Activated B cell treated with CpG ODN at 0.5 μM for 24 hours (primary cell): ENCODE measurements at regions of chr9 and their contacts with region 1.

Region 1: DNA sequence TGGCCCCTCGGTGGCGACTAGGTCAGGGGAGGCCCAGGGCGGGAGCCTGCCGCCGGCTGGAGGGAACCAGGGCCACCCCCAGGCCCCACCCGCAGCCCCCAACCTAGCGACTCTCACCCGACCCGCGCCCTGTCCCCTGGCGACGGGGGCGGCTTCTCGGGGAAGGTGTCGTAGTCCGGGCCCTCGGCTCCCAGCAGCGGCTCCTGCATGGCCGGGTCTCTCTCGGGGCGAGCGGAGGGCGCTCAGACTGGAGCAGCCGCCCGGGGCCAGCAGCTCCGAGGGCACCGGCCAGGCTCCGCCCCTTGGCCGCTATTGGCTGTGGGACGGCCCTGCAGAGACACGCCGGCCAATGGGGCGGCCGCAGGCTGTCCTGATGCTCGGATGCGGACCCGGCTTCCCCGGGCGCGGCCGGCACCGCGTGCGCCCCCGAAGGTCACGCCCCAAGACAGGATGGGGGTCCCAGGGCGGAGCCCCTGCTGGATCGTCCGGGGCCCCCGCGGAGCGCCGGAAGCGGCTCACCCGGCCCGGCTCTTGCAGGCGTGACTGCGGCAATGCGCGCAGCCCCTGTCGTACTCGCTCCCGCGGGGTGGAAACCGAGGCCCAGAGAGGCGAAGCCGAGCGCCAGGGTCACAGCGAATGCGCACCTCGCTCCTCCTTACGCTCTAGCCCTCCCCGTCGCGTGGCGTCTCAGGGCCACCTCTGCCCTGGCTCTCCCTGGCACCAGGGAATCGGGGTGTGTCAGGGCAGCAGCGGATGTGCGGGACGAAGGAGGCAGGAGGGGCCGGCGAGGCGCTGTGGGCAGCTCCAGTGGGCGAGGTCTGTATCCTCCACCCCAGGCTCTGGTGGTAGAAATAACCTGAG is at the start of gene SLC2A6:
- DNase-seq: peak; percentile 85
- ATAC-seq: peak; percentile 93
- H3K4me3 Mint-ChIP-seq: peak within 1 kb of the TSS; percentile 90
- H3K27ac Mint-ChIP-seq: peak within 1 kb of the TSS; percentile 90
- H3K4me1 Mint-ChIP-seq: peaks cover 29% of the 10 kb centered on the region
- H3K27me3 Mint-ChIP-seq: no peaks in the 10 kb centered on the region
- CTCF ChIP-seq: no peak
- total RNA-seq, gene SLC2A6: 32.9 and 37.4 TPM in 2 replicates

Region 2: DNA sequence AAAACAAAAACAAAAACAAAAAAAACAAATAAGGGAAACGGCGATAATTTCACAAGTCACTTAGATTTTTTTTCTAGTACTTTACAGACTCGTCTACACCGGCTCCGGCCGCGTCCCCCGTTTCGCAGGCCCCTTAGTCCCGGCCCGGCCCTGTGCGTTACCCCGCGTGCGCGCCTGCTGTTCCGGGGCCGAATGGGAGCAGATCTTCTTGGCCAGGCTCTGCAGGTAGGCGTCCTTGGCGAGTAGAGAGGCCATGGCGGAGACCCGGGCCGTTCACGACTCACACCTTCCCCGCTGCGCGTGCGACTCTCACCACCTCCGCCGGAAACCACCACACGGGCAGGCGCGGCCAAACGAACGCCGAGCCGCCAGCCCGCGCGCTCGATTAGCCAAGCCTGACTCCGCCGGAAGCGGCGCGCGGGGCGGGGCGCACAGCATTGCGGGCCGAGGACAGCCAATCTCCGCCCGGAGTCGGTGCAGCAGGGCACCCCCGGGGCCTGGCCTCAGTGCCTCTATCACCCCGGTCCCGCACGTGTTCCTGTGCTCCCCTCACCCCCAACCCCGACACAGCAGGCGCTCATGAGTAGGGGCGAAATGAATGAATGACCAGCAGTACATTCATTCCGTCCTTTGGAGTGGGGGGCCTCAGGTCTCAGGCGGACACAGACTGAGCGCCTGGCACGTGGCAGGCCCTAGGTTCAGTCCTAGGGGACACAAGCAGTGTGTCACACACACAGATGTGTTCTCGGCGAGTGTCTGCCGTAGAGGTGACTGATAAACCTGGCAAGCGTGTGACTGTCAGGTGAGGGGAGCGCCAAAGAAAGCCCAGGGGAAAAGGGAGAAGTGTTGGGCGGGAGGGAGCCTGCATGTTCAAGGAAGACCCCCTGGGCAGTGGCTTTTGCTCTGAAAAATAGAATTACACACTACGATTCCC is 142.9 kb before region 1 on chr9 and contains the start of gene SURF6:
- CTCF ChIA-PET with region 1: no interaction called
- POLR2A ChIA-PET with region 1: no interaction called
- intact Hi-C with region 1: loop called (anchors 2 kb)
- DNase-seq: peak; percentile 94
- ATAC-seq: peak; percentile 93
- H3K4me3 Mint-ChIP-seq: peak within 1 kb of the TSS; percentile 97
- H3K27ac Mint-ChIP-seq: peak within 1 kb of the TSS; percentile 92
- H3K4me1 Mint-ChIP-seq: peaks cover 57% of the 10 kb centered on the region
- H3K27me3 Mint-ChIP-seq: no peaks in the 10 kb centered on the region
- CTCF ChIP-seq: no peak
- total RNA-seq, gene SURF6: 22.4 and 23.9 TPM in 2 replicates

Region 3: DNA sequence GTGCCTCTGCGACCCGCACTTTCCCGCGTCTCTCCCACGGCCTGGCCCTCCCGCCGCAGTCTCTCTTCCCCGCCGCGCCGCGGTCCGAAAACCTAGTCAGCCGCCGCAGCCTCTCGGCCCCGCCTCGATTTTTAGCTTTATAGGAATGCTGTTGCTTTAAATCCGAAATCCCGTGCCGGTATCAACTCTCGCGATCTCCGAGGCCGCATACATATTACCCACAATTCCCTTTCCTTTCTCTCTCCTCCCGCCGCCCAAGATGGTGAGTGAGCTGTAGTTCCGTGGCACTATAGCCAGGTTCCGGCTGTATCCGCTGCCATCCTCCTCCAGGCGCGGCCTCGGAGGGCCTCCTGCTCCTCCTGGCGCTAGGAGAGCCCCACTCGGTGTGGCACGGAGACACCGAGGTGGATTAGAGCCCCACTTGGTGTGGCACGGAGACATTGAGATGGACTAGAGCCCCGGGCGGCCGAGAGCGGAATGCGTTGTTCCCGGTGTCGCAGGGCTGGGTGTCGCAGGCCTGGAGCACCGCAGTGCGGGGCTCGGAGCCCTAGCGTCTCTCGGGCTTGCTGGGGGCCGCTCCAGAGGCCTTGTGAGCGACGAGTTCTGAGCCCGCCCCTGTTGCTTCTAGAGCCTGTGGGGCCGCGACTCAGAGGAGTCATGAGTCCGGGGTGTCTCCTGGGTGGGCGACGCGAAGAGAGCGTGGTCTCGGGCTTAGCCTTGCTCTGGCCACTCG is 130.9 kb before region 1 on chr9 and contains the starts of genes MED22 and RPL7A:
- CTCF ChIA-PET with region 1: no interaction called
- POLR2A ChIA-PET with region 1: interaction called, 3 read pairs
- intact Hi-C with region 1: loop called (anchors 2 kb)
- DNase-seq: peak; percentile 82
- ATAC-seq: peak; percentile 83
- H3K4me3 Mint-ChIP-seq: peak within 1 kb of the TSS; percentile 99
- H3K27ac Mint-ChIP-seq: peak within 1 kb of the TSS; percentile 96
- H3K4me1 Mint-ChIP-seq: peaks cover 45% of the 10 kb centered on the region
- H3K27me3 Mint-ChIP-seq: no peaks in the 10 kb centered on the region
- CTCF ChIP-seq: no peak
- total RNA-seq, gene MED22: 40.7 and 45.7 TPM in 2 replicates
- total RNA-seq, gene RPL7A: 3,786 and 4,134 TPM in 2 replicates

Region 4: GRCh38 chr9:133406480-133407307 is 72.4 kb before region 1 on chr9:
- CTCF ChIA-PET with region 1: no interaction called
- POLR2A ChIA-PET with region 1: no interaction called
- intact Hi-C with region 1: loop called (anchors 2 kb)
- DNase-seq: peak; percentile 71
- ATAC-seq: peak; percentile 95
- H3K4me3 Mint-ChIP-seq: no peak overlapping the region
- H3K27ac Mint-ChIP-seq: peak overlapping the region; percentile 61
- H3K4me1 Mint-ChIP-seq: peaks cover 6% of the 10 kb centered on the region
- H3K27me3 Mint-ChIP-seq: no peaks in the 10 kb centered on the region
- CTCF ChIP-seq: peak; percentile 56

Region 5: GRCh38 chr9:133417541-133418461 is 61.3 kb before region 1 on chr9 and contains the start of gene REXO4:
- CTCF ChIA-PET with region 1: no interaction called
- POLR2A ChIA-PET with region 1: interaction called, 6 read pairs
- intact Hi-C with region 1: loop called (anchors 1 kb)
- DNase-seq: peak; percentile 86
- ATAC-seq: peak; percentile 84
- H3K4me3 Mint-ChIP-seq: peak within 1 kb of the TSS; percentile 90
- H3K27ac Mint-ChIP-seq: peak within 1 kb of the TSS; percentile 91
- H3K4me1 Mint-ChIP-seq: peaks cover 71% of the 10 kb centered on the region
- H3K27me3 Mint-ChIP-seq: no peaks in the 10 kb centered on the region
- CTCF ChIP-seq: no peak
- total RNA-seq, gene REXO4: 31.6 and 33.3 TPM in 2 replicates

Region 6: DNA sequence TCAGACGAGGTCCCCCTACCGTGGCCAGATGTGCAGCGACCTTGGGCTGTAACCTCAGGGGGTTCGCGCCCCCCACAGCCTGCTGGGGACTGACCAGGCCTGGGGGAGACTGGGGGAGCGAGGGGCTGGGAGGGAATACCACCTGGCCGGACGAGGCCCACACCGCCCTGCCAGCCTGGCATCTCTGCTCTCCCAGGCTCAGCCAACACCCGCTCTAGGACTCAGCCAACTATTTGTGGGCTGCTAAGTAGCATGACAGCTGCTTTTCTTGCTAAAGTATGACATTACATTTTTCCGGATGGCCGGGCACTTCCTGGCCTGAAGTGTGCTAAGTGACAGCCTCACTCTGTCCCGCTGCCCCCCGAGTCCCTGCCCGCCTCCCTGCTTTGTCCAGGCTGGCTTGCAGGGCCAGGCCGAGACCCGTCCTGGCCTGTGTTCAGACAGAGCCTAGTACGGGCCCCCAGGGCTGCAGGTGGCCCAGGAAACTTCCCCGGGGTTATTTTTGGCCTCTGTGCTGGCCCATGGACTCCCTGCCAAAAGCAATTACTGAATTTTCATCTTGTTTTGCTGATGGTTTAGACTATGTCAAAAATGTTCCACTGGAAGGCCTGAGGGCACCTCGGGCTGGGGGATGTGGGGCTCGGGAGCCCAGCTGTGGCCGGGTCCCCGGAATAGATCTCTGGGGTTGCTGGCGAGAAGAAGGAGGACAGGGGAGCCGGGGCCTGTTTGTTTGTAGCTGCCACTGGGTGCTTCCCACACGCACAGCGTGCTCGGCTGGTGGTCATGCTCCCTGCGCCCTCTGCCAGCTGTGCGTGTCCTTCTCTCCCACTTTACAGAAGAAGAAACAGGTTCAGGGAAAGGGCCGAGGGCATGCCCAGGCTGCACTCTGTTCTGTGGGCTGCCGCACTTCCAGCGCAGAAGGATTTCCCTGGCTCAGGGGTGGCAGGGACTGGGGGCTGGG is 13.3 kb after region 1 on chr9:
- CTCF ChIA-PET with region 1: no interaction called
- POLR2A ChIA-PET with region 1: no interaction called
- intact Hi-C with region 1: no loop called
- DNase-seq: no peak
- ATAC-seq: no peak
- H3K4me3 Mint-ChIP-seq: no peak overlapping the region
- H3K27ac Mint-ChIP-seq: no peak overlapping the region
- H3K4me1 Mint-ChIP-seq: no peaks in the 10 kb centered on the region
- H3K27me3 Mint-ChIP-seq: no peaks in the 10 kb centered on the region
- CTCF ChIP-seq: no peak

Region 7: GRCh38 chr9:133673258-133673655 is 194.2 kb after region 1 on chr9:
- CTCF ChIA-PET with region 1: no interaction called
- POLR2A ChIA-PET with region 1: no interaction called
- intact Hi-C with region 1: no loop called
- DNase-seq: no peak
- ATAC-seq: no peak
- H3K4me3 Mint-ChIP-seq: no peak overlapping the region
- H3K27ac Mint-ChIP-seq: no peak overlapping the region
- H3K4me1 Mint-ChIP-seq: no peaks in the 10 kb centered on the region
- H3K27me3 Mint-ChIP-seq: peaks cover 2% of the 10 kb centered on the region
- CTCF ChIP-seq: no peak

Region 8: DNA sequence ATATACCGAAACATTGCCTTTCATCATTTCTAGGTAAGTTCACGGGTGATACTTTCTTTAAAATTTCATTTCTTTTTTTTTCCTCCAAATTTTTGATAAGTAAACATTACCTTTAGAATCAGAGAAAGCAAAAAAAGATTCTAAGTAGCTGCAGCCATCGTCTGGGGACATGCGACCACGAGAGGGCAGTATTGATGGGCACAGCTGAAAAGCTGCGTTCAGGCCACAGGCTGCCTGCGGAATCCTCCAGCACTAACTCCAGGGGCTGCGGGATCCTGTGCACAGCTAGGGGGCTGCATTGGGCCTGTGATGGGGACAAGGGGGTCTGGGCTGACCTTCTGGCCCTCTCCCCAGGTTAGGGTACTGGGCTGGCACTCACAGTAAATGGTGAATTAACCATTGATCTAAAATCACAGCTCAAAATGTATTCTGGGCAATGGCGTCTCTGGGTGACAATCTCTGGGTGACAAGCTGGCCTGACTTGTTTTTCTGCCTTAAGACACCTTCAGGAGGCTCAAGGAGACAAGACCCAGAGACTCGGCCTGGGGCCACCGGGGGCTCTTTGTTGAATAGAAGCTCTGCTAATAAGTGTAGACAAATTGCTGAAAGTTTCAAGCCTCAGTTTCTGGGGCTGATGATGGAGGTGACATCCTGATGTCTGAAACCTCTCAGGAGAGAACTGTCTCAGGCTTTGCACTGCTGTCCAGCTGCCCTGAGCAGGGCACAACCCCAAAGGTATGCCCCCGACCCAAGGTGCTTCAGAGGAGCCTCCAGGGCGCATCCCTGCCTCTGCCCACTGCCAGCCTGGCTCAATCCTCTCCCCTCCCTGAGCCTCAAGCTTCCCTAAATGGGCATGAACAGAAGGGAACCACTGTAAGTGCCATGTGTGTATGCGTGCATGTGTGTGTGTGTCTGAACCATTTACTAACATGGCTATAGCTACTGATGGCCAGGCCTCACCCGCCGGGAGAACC is 303.4 kb after region 1 on chr9:
- CTCF ChIA-PET with region 1: no interaction called
- POLR2A ChIA-PET with region 1: no interaction called
- intact Hi-C with region 1: no loop called
- DNase-seq: peak; percentile 60
- ATAC-seq: peak; percentile 35
- H3K4me3 Mint-ChIP-seq: peak overlapping the region; percentile 20
- H3K27ac Mint-ChIP-seq: peak overlapping the region; percentile 6
- H3K4me1 Mint-ChIP-seq: peaks cover 60% of the 10 kb centered on the region
- H3K27me3 Mint-ChIP-seq: no peaks in the 10 kb centered on the region
- CTCF ChIP-seq: peak; percentile 55

Region 9: DNA sequence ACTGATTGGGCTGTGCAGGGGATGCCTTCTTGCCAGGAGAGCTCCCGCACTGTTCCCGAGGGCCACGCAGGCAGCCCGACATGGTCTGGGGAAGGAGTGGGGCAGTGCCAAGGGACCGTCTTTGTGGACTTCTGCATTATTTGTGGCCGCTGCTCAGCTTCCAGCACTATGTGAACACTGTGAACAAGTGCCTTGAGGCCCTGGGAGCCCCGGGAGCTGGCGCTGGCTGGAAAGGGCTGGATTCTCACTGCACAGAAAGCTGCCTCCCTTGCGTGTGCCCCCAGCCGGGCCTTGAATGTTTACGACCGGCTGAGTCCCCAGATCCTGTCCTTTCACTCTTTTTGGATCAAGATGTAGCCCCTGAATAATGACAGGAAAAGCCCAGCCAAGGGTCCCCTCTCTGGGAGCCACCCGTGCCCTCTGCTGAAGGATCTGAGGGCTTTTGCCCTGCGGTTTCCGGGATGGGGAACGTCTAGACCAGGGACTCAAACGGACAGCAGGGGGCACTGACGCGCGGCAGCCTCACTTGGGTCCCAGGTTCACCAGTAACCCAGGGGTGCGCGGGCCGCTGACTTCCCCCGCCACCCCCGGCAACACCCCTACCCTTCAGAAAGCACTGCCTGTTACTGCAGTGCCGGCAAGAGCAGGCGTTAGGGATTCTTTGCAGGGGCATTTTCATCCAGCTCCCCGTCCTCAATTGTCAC is 1302.7 kb after region 1 on chr9:
- CTCF ChIA-PET with region 1: no interaction called
- POLR2A ChIA-PET with region 1: no interaction called
- intact Hi-C with region 1: no loop called
- DNase-seq: no peak
- ATAC-seq: no peak
- H3K4me3 Mint-ChIP-seq: no peak overlapping the region
- H3K27ac Mint-ChIP-seq: no peak overlapping the region
- H3K4me1 Mint-ChIP-seq: no peaks in the 10 kb centered on the region
- H3K27me3 Mint-ChIP-seq: no peaks in the 10 kb centered on the region
- CTCF ChIP-seq: no peak